PC-9 (cell line): ENCODE measurements at regions of chr16 and their contacts with region 1.

Region 1: GRCh38 chr16:24499193-24499814 is 40.1 kb upstream of the RBBP6 start:
- DNase-seq: peak in 1 of 2 experiments; percentile 29
- H3K4me3 ChIP-seq: no peak overlapping the region
- H3K27ac ChIP-seq: no peak overlapping the region
- H3K4me1 ChIP-seq: peaks cover under 1% of the 10 kb centered on the region; the same call in 1 of the 2 replicates
- H3K27me3 ChIP-seq: peaks cover 27% of the 10 kb centered on the region
- CTCF ChIP-seq: peak; percentile 60

Region 2: DNA sequence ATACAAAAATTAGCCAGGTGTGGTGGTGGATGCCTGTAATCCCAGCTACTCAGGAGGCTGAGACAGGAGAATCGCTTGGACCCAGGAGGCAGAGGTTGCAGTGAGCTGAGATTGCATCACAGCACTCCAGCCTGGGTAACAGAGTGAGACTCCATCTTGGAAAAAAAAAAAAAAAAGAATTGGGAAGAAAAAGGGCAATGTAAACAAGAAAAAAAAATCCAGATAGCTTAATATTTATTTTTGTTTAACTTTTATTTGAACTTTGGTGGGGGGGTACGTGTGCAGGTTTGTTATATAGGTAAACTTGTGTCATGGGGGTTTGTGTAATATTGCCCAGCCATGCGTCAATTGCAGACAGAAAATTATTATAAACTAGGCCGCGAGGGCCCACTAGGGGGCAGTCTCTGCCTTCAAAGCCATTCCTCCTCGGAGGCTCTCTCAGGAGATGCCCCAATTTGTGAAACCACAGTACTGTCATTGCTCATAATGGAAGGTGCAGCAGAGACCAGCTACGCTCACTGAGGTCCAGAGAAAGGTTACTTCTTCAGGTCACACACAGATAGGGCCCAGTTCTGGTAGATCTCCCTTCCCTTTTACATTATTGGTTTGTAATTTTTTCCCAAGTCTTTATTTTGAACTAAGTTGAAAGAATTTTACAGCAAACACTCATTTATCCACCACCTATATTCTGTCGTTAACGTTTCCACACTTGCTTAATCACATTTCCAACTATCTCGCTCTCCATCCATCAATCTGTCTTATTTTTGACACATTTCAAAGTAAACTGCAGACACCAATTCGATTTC is 457.3 kb before region 1 on chr16:
- CTCF ChIA-PET with region 1: interaction called, 15 read pairs
- POLR2A ChIA-PET with region 1: no interaction called
- intact Hi-C with region 1: loop called (anchors 1 kb)
- DNase-seq: peak in 1 of 2 experiments; percentile 68
- H3K4me3 ChIP-seq: no peak overlapping the region
- H3K27ac ChIP-seq: no peak overlapping the region
- H3K4me1 ChIP-seq: no peaks in the 10 kb centered on the region
- H3K27me3 ChIP-seq: peaks cover 65% of the 10 kb centered on the region
- CTCF ChIP-seq: peak; percentile 90

Region 3: DNA sequence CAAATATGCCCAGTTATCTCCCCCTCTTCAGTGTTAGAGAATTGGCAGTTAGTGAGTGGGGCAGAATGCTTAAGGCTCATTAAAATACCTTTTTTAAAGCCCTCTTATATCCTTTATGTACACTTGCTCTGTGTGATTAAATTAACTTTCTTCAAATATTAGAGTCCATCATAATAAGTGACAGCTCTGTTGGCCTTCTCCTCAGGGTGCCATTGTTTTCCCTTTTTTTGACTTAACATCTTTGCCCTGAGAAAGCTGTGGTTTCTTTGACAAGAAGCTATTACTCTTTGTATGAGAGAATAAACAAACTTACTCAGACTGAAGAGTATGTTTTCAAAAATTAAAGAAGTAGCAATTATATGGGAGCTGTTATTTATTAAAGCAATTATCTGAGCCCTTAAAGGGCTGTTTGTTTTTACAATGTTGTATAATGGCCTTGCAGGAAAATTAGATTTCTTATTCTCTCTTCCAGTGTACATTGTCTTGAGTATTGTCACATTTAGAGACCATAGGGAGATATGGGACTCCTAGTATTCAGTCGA is 53.5 kb after region 1 on chr16:
- CTCF ChIA-PET with region 1: no interaction called
- POLR2A ChIA-PET with region 1: no interaction called
- intact Hi-C with region 1: no loop called
- DNase-seq: no peak
- H3K4me3 ChIP-seq: no peak overlapping the region
- H3K27ac ChIP-seq: no peak overlapping the region
- H3K4me1 ChIP-seq: no peaks in the 10 kb centered on the region
- H3K27me3 ChIP-seq: no peaks in the 10 kb centered on the region
- CTCF ChIP-seq: no peak